MCF 10A (cell line): ENCODE measurements at regions of chr11 and their contacts with region 1.

Region 1: DNA sequence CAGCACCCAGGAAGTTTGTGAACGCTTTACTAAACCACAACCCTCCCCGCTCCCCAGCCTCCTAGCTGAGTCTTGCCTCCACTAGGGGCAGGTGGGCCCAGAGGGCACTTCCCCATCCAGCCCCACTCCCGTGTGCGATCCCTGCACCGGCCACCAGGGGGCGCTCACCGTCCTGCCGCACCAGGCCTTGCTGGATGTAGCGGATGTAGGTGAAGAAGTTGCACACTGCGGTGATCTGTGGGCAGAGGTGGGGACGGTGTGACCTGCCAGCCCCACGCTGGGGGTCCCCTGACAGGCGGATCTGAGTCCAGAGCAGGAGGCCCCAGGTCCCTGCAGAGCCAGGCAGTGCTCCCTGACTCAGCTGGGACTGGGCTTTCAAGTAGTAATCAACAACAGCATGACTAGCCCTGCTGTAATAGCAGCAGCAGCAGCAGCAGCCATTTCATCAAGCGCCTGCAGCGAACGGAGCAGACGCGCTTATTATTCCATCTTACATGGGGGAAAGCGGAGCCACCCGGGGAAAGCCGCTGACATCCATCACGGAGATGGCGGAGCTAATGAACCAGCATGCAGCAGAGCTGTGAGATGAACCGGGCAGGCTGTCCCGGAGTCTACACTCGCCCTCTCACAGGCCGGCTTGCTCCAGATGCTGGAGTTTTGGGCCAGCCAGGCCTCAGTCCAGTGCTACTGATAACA is 7.9 kb upstream of the FADS3 start:
- DNase-seq: peak; percentile 76
- H3K4me3 Mint-ChIP-seq: no peak overlapping the region
- H3K27ac Mint-ChIP-seq: no peak overlapping the region
- H3K4me1 Mint-ChIP-seq: peaks cover 1% of the 10 kb centered on the region
- H3K27me3 Mint-ChIP-seq: no peaks in the 10 kb centered on the region
- CTCF ChIP-seq: peak; percentile 100

Region 2: GRCh38 chr11:61871158-61871597 is 28.1 kb before region 1 on chr11:
- CTCF ChIA-PET with region 1: interaction called, 12 read pairs
- POLR2A ChIA-PET with region 1: no interaction called
- intact Hi-C with region 1: loop called (anchors 1 kb)
- DNase-seq: peak; percentile 78
- H3K4me3 Mint-ChIP-seq: no peak overlapping the region
- H3K27ac Mint-ChIP-seq: no peak overlapping the region
- H3K4me1 Mint-ChIP-seq: peaks cover 18% of the 10 kb centered on the region
- H3K27me3 Mint-ChIP-seq: no peaks in the 10 kb centered on the region
- CTCF ChIP-seq: peak; percentile 97

Region 3: GRCh38 chr11:61940466-61940865 is 41.2 kb after region 1 on chr11:
- CTCF ChIA-PET with region 1: interaction called, 217 read pairs
- POLR2A ChIA-PET with region 1: no interaction called
- intact Hi-C with region 1: no loop called
- DNase-seq: no peak
- H3K4me3 Mint-ChIP-seq: no peak overlapping the region
- H3K27ac Mint-ChIP-seq: no peak overlapping the region
- H3K4me1 Mint-ChIP-seq: no peaks in the 10 kb centered on the region
- H3K27me3 Mint-ChIP-seq: peaks cover 33% of the 10 kb centered on the region
- CTCF ChIP-seq: no peak

Region 4: GRCh38 chr11:61967116-61967923 is 68.0 kb after region 1 on chr11 and contains the start of gene FTH1:
- CTCF ChIA-PET with region 1: interaction called, 26 read pairs
- POLR2A ChIA-PET with region 1: interaction called, 3 read pairs
- intact Hi-C with region 1: loop called (anchors 5 kb)
- DNase-seq: peak; percentile 90
- H3K4me3 Mint-ChIP-seq: peak within 1 kb of the TSS; percentile 90
- H3K27ac Mint-ChIP-seq: peak within 1 kb of the TSS; percentile 97
- H3K4me1 Mint-ChIP-seq: peaks cover 58% of the 10 kb centered on the region
- H3K27me3 Mint-ChIP-seq: no peaks in the 10 kb centered on the region
- CTCF ChIP-seq: no peak
- total RNA-seq, gene FTH1: 8,367 and 15,492 TPM in 2 replicates

Region 5: GRCh38 chr11:62061351-62062222 is 162.3 kb after region 1 on chr11:
- CTCF ChIA-PET with region 1: interaction called, 149 read pairs
- POLR2A ChIA-PET with region 1: interaction called, 3 read pairs
- intact Hi-C with region 1: no loop called
- DNase-seq: peak; percentile 32
- H3K4me3 Mint-ChIP-seq: no peak overlapping the region
- H3K27ac Mint-ChIP-seq: no peak overlapping the region
- H3K4me1 Mint-ChIP-seq: no peaks in the 10 kb centered on the region
- H3K27me3 Mint-ChIP-seq: no peaks in the 10 kb centered on the region
- CTCF ChIP-seq: peak; percentile 38

Region 6: GRCh38 chr11:62108017-62108750 is 208.9 kb after region 1 on chr11:
- CTCF ChIA-PET with region 1: interaction called, 79 read pairs
- POLR2A ChIA-PET with region 1: no interaction called
- intact Hi-C with region 1: loop called (anchors 2 kb)
- DNase-seq: peak; percentile 69
- H3K4me3 Mint-ChIP-seq: no peak overlapping the region
- H3K27ac Mint-ChIP-seq: no peak overlapping the region
- H3K4me1 Mint-ChIP-seq: no peaks in the 10 kb centered on the region
- H3K27me3 Mint-ChIP-seq: no peaks in the 10 kb centered on the region
- CTCF ChIP-seq: peak; percentile 79